ENCODE measurements at regions of chr3 and their contacts with region 1.

Region 1: GRCh38 chr3:177069514-177070329 is 127.6 kb downstream of the TBL1XR1 start:
- DNase-seq: no peak
- H3K4me3 ChIP-seq: no peak overlapping the region
- H3K27ac ChIP-seq: no peak overlapping the region
- H3K4me1 ChIP-seq: peaks cover 0 to 33% (median 14%) of the 10 kb centered on the region in 4 donors
- H3K27me3 ChIP-seq: no peaks in the 10 kb centered on the region
- CTCF ChIP-seq: no peak
- EP300 ChIP-seq: no peak
- POLR2A ChIP-seq: no peak

Region 2: DNA sequence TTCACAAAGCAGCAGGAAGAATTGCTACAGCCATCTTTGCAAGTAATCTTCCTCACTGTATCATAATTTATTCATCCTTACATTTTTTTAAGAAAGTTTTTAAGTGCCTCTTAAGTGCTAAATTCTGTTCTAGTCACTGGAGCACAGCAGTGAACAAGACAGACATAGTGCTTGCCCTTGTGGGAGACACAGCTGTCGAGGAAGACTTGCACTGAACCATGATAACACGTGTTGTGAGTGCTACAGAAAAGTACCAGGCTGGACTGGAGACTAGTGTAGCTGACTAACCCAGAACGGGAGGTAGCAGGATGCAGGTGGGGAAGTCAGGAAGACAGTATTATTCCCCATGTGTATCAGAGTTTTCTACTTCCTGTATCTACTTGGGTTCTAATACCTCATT is 173.1 kb before region 1 on chr3:
- in situ Hi-C with region 1: no loop called
- intact Hi-C with region 1: no loop called
- DNase-seq: no peak
- H3K4me3 ChIP-seq: no peak overlapping the region
- H3K27ac ChIP-seq: no peak overlapping the region
- H3K4me1 ChIP-seq: no peaks in the 10 kb centered on the region
- H3K27me3 ChIP-seq: no peaks in the 10 kb centered on the region
- CTCF ChIP-seq: no peak
- EP300 ChIP-seq: no peak
- POLR2A ChIP-seq: no peak

Region 3: DNA sequence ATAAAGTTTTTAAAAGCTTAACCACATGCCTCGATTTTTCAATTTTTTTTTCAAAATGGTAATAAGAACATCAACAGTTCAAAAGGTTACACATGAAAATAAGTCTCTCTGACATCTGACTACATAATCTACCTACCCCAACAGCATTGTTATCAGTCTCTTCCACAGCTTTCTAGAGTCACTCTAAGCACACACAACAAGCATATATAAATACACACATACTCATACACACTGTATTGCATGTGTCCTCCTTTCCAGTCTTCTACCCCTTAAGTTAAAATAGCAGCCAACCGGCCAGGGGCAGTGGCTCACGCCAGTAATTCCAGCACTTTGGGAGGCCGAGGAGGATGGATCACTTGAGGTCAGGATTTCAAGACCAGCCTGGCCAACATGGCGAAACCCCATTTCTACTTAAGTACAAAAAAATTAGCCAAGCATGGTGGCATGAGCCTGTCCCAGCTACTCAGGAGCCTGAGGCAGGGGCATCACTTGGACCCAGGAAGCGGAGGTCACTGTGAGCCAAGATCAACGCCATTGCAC is 115.4 kb after region 1 on chr3:
- in situ Hi-C with region 1: loop called in 2 of 4 experiments (anchors 10 to 25 kb)
- intact Hi-C with region 1: no loop called
- DNase-seq: no peak
- H3K4me3 ChIP-seq: no peak overlapping the region
- H3K27ac ChIP-seq: no peak overlapping the region
- H3K4me1 ChIP-seq: peaks cover 15 to 62% (median 32%) of the 10 kb centered on the region in 4 donors
- H3K27me3 ChIP-seq: no peaks in the 10 kb centered on the region
- CTCF ChIP-seq: no peak
- EP300 ChIP-seq: no peak
- POLR2A ChIP-seq: no peak

Measured in transverse colon (tissue), 4 donors.